Dendritic cell treated with granulocyte-macrophage colony-stimulating factor and Interleukin-4, amounts not matched to agents 40 ng/mL and 50 ng/mL, for 4 days (primary cell): ENCODE measurements at regions of chr3 and their contacts with region 1.

Region 1: DNA sequence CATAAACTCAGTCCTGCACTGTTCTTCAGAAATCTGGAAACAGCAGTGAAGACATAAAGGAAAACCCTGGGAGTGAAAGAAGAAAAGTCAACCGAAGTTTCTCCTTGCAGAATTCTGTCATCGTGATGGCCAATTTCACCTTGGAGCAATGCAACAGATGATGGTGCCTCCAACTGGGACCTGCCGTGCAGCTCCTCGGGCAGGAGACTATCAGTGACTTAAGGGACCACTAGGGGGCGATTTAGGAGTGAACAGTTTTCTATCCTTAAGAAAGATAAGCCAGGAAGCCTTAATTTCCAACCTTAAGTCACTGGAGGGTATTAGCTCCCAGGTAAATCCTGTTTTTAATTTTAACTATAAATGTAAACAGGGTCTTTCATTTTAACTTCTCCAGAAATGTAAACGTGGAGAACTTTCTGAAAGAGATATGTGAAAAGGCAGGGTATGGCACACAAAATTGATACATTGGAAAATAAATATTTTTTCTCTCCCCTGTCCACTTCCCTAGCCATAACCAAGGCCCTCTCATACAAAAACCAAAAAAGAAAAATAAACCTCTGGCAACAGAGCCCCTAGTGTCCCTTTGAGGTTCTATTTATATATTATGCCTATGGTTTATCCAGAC is 116.3 kb downstream of the PDZRN3 start:
- H3K4me3 Mint-ChIP-seq: no peak overlapping the region
- H3K27ac Mint-ChIP-seq: no peak overlapping the region
- H3K4me1 Mint-ChIP-seq: no peaks in the 10 kb centered on the region
- H3K27me3 Mint-ChIP-seq: peaks cover 3% of the 10 kb centered on the region

Region 2: DNA sequence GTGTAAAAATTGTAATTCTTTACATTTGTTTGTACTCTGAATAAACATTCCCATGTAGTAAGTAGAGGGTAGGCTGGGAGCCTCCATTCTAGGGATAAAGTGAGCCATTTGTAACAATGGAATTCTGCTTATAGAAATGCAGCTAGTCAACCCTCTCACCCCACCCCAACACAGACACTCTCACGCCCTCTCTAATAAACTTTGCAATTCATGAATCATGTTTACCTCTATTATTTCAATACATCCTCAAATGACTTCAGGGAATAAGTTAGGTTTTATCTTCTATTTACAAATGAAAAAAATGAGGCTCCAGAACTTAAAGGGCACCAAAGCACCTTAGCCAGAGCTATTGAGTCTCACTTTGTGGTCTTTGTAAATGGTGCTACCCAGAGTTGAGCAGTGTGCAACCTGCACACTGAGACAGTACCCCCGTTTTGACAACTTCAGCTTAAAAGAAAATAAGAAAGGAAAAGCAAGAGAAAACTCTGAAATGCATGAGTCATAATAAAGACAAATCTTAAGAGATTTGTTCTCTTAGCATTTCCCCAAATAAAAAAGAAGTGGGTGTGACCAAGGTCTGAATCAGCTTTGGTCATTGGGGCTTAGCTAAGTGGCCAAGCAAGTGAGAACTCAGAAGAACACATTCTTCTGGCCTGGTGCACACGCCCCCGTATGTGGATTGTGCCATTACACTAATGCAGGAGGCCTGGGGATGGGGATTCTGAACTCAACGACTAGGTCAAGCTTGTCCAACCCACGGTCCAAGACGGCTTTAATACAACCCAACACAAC is 173.0 kb after region 1 on chr3:
- intact Hi-C with region 1: no loop called
- H3K4me3 Mint-ChIP-seq: no peak overlapping the region
- H3K27ac Mint-ChIP-seq: no peak overlapping the region
- H3K4me1 Mint-ChIP-seq: no peaks in the 10 kb centered on the region
- H3K27me3 Mint-ChIP-seq: no peaks in the 10 kb centered on the region

Region 3: DNA sequence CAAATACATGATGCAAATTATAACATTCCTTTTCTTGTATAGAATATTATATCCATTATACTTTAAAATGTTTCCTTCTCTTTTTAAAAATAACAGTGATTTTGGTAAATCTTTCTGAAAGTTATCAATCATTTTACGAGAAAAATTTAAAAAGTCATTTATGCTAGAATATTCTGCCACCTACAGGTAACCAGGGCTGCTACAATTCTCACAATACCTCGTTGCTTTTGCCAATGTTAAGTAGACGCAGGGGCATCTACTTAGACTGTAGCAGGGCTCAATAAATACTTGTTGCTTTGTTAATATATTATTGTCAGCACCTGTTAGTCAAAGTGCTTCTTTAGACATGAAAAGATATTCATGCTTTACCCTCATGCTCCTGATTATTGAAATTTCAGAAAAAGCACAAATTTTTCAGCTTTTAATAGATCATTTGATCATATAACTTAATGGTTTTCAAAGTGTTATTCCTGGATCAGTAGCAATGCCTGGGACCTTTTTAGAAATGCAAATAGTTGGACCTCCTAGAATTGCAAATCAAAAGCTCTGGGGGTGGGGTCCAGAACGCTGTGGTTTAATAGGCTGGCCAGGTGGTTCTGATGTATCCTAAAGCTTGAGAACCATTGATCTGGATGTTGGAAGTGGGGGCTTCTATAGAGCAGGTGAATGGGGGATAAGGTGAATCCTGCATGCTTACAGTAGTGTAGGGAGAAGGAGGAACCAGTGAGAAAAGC is 339.9 kb after region 1 on chr3:
- intact Hi-C with region 1: loop called (anchors 2 kb)
- H3K4me3 Mint-ChIP-seq: no peak overlapping the region
- H3K27ac Mint-ChIP-seq: no peak overlapping the region
- H3K4me1 Mint-ChIP-seq: no peaks in the 10 kb centered on the region
- H3K27me3 Mint-ChIP-seq: peaks cover 1% of the 10 kb centered on the region